CD8-positive, alpha-beta memory T cell (primary cell): ENCODE measurements at regions of chrX and their contacts with region 1.

Region 1: GRCh38 chrX:149527705-149528104 is 13.1 kb upstream of the EOLA1 start:
- DNase-seq: peak in 3 of 5 donors; percentile 36 to 53 (median 52)
- H3K4me3 ChIP-seq: no peak overlapping the region
- H3K4me3 Mint-ChIP-seq: peak overlapping the region in 5 of 7 donors; percentile 10 to 74 (median 22)
- H3K27ac ChIP-seq: no peak overlapping the region
- H3K27ac Mint-ChIP-seq: peak overlapping the region; percentile 43 to 98 (median 84)
- H3K4me1 ChIP-seq: peaks cover 27% of the 10 kb centered on the region
- H3K4me1 Mint-ChIP-seq: peaks cover 9 to 35% (median 23%) of the 10 kb centered on the region in 3 donors
- H3K27me3 ChIP-seq: no peaks in the 10 kb centered on the region
- H3K27me3 Mint-ChIP-seq: no peaks in the 10 kb centered on the region

Region 2: GRCh38 chrX:149487292-149487691 is 40.4 kb before region 1 on chrX:
- CTCF ChIA-PET with region 1: no interaction called
- POLR2A ChIA-PET with region 1: no interaction called
- DNase-seq: no peak
- H3K4me3 ChIP-seq: no peak overlapping the region
- H3K4me3 Mint-ChIP-seq: peak overlapping the region in 1 of 7 donors; percentile 25
- H3K27ac ChIP-seq: no peak overlapping the region
- H3K27ac Mint-ChIP-seq: peak overlapping the region in 3 of 8 donors; percentile 5 to 85 (median 47)
- H3K4me1 ChIP-seq: no peaks in the 10 kb centered on the region
- H3K4me1 Mint-ChIP-seq: peaks cover 12 to 37% (median 19%) of the 10 kb centered on the region in 3 donors
- H3K27me3 ChIP-seq: no peaks in the 10 kb centered on the region
- H3K27me3 Mint-ChIP-seq: peaks cover 0 to 3% of the 10 kb centered on the region in 2 donors

Region 3: DNA sequence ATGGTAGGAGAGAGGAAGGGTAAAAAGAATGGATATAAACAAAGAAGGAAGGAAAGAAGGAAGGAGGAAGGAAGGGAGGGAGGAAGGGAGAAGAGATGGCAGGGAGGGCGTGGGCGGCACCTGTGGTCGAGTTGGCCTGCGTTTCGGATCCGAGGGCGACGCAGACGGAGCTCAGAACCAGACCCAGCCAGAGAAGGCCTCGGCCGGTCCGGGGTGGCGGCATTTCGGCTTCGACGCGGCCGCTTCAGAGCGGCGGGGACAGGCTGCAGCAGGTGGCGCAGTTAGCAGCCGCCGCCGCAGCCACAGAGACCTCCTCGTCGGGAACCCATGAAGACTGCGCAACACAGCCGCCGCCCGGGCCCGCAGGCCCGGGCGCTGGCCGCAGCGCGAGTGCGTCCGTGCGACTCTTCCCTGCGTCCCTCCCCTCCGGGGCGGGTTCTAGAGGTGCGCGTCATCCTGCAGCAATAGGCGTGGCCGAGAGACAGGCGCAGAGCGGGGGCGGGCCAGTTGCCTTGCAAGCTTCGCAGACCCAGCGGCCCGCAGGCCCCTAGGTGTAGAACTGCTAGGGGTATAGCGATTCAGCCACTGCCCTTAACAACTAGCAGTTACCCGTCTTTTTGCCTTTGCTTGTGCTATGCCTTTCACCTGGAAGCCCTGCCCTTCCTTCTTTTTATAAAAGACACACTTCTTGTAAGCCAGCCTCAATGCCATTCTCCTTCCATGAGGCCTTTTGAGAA is 22.6 kb before region 1 on chrX and contains the start of gene IDS:
- CTCF ChIA-PET with region 1: interaction called, 5 read pairs
- POLR2A ChIA-PET with region 1: interaction called, 12 read pairs
- DNase-seq: peak; percentile 81 to 95 (median 84)
- H3K4me3 ChIP-seq: peak within 1 kb of the TSS; percentile 85
- H3K4me3 Mint-ChIP-seq: peak within 1 kb of the TSS; percentile 86 to 99 (median 93)
- H3K27ac ChIP-seq: peak within 1 kb of the TSS; percentile 99
- H3K27ac Mint-ChIP-seq: peak within 1 kb of the TSS; percentile 94 to 100 (median 99)
- H3K4me1 ChIP-seq: peaks cover 33% of the 10 kb centered on the region
- H3K4me1 Mint-ChIP-seq: peaks cover 21 to 36% (median 34%) of the 10 kb centered on the region in 3 donors
- H3K27me3 ChIP-seq: no peaks in the 10 kb centered on the region
- H3K27me3 Mint-ChIP-seq: peaks cover 0 to 16% of the 10 kb centered on the region in 2 donors
- total RNA-seq, gene IDS: 84.6 to 86.0 TPM

Region 4: DNA sequence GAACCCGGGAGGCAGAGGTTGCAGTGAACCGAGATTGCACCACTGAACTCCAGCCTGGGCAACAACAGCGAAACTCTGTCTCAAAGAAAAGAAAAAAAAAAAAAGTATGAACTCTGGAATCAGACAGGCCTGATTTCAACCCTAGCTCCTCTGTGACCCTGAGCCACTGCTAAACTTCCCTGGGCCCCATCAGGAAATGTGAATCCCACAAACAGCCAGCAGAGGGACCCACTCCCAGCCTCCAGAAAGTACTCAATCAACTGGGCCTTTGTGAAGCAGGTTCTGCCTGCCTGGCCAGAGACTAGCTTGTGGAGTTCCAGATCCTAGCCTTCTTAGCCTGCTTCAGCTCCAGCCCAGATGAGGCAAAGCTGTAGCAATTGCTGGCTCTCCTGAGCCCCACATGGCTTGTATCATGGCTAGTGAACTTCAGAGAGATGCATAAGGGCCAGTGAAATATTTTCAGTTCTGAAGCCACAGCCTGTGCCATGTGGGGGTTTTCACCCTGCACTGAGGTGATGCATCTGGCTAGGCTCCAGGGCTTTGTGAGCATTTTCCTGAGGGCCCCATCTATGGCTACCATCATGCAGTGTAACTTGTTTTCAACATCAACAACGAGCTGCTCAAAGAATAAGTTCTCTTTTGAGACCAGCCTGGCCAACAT is 15.3 kb before region 1 on chrX:
- CTCF ChIA-PET with region 1: interaction called, 24 read pairs
- POLR2A ChIA-PET with region 1: interaction called, 5 read pairs
- DNase-seq: peak; percentile 42 to 71 (median 54)
- H3K4me3 ChIP-seq: no peak overlapping the region
- H3K4me3 Mint-ChIP-seq: peak overlapping the region in 4 of 7 donors; percentile 41 to 57 (median 48)
- H3K27ac ChIP-seq: no peak overlapping the region
- H3K27ac Mint-ChIP-seq: peak overlapping the region; percentile 87 to 96 (median 94)
- H3K4me1 ChIP-seq: peaks cover 33% of the 10 kb centered on the region
- H3K4me1 Mint-ChIP-seq: peaks cover 29 to 45% (median 38%) of the 10 kb centered on the region in 3 donors
- H3K27me3 ChIP-seq: no peaks in the 10 kb centered on the region
- H3K27me3 Mint-ChIP-seq: peaks cover 0 to 6% of the 10 kb centered on the region in 2 donors

Region 5: DNA sequence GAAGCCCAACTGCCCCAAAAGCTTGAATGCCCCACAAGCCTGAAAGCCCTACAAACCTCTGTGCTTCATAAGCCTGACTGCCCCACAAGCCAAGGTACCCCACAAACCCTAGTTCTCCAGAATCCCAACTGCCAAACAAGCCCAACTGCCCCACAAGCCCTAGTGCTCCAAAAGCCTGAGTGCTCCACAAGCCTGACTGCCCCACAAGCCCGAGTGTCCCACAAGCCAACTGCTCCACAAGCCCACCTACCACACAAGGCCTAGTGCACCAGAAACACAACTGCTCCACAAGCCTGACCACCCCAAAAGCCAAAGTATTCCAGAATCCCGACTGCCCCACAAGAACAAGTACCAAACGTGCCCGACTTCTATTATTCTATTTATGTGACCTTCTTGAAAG is 35.7 kb after region 1 on chrX:
- CTCF ChIA-PET with region 1: no interaction called
- POLR2A ChIA-PET with region 1: no interaction called
- DNase-seq: no peak
- H3K4me3 ChIP-seq: no peak overlapping the region
- H3K4me3 Mint-ChIP-seq: no peak overlapping the region
- H3K27ac ChIP-seq: no peak overlapping the region
- H3K27ac Mint-ChIP-seq: no peak overlapping the region
- H3K4me1 ChIP-seq: no peaks in the 10 kb centered on the region
- H3K4me1 Mint-ChIP-seq: no peaks in the 10 kb centered on the region
- H3K27me3 ChIP-seq: no peaks in the 10 kb centered on the region
- H3K27me3 Mint-ChIP-seq: peaks cover 0 to 5% of the 10 kb centered on the region in 2 donors

Region 6: DNA sequence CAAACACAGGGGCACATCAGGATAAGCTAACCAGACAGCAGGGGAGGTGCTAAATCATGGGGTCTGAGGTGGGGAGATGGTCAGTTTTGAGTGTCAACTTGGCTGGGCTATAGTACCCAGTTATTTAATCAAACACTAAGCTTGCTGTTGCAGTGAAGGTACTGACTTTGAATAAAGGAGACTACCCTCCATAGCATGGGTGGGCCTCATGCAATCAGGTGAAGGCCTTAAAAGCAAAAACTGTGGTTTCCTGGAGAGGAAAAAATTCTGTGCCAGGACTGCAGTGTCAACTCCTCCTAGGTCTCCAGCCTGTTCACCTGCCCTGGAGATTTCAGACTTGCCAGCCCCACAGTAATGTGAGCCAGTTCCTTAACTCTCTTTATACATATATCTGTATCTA is 80.0 kb after region 1 on chrX:
- CTCF ChIA-PET with region 1: no interaction called
- POLR2A ChIA-PET with region 1: no interaction called
- DNase-seq: no peak
- H3K4me3 ChIP-seq: no peak overlapping the region
- H3K4me3 Mint-ChIP-seq: no peak overlapping the region
- H3K27ac ChIP-seq: no peak overlapping the region
- H3K27ac Mint-ChIP-seq: no peak overlapping the region
- H3K4me1 ChIP-seq: no peaks in the 10 kb centered on the region
- H3K4me1 Mint-ChIP-seq: peaks cover 0 to 14% (median 3%) of the 10 kb centered on the region in 3 donors
- H3K27me3 ChIP-seq: no peaks in the 10 kb centered on the region
- H3K27me3 Mint-ChIP-seq: no peaks in the 10 kb centered on the region

Region 7: DNA sequence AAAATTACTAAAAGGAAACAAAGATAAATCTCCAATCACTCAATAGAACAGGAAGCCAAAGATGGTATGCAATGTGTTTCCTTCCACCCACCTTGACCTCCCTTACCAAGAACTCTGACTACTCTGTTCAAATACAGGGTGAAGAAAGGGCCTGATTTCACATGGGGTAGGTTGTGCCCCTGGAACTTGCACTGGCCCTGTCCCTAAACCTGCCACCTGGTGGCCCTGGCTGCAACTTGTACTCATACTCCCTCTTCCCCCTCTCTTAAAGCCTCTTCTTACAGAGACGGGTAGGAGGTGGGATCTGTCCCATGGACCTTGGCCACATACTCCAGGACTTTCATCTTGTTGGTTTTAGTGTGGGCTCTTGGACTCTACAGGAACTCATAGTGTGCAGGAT is 121.2 kb after region 1 on chrX:
- CTCF ChIA-PET with region 1: no interaction called
- POLR2A ChIA-PET with region 1: no interaction called
- DNase-seq: no peak
- H3K4me3 ChIP-seq: no peak overlapping the region
- H3K4me3 Mint-ChIP-seq: no peak overlapping the region
- H3K27ac ChIP-seq: no peak overlapping the region
- H3K27ac Mint-ChIP-seq: no peak overlapping the region
- H3K4me1 ChIP-seq: no peaks in the 10 kb centered on the region
- H3K4me1 Mint-ChIP-seq: no peaks in the 10 kb centered on the region
- H3K27me3 ChIP-seq: no peaks in the 10 kb centered on the region
- H3K27me3 Mint-ChIP-seq: peaks cover 10 to 17% of the 10 kb centered on the region in 2 donors